GM10248 (cell line): ENCODE measurements at regions of chr19 and their contacts with region 1.

Region 1: GRCh38 chr19:810883-811489 is 10.8 kb downstream of the PLPPR3 start:
- DNase-seq: no peak
- CTCF ChIP-seq: no peak

Region 2: GRCh38 chr19:728011-728410 is 83.0 kb before region 1 on chr19:
- CTCF ChIA-PET with region 1: no interaction called
- POLR2A ChIA-PET with region 1: no interaction called
- DNase-seq: no peak
- CTCF ChIP-seq: no peak

Region 3: DNA sequence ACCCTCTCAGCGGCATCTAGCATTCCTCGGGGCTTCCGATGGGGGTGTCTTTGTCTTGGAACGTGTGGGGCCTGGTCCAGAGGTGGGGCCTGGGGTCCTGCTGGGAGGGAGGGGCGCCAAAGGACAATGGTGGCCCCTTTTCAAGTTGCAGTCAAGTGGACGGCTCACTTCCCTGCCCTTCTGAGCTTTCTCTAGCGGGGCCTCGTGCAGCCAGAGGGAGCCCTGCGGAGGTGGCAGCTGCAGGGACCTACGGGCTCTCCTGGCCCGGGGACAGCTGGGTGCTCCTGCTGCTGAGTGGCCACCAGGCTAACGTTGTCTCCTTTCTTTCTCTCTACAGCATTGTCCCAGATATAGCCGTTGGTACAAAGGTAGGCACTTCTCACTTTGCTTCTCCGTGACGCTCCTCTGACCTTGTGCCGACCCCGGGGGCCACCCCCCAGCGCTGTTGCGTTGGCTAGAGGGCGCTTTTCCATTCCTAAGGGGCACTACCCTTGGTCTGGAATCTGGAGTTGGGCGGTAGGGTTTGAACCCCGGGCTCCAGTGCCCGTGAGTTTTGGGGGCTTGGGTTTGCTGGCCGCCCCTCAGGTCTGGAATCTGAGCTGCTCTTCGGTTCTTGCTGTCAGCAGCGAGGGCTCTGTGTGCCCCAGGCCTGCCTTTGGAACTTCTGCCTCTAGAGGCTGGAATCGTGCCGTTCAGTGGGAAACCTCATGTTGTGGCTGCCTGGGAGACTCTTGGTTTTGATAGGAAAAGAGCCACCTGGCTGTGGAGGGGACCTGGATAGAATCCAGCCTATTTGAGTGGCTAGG is 11.7 kb before region 1 on chr19:
- CTCF ChIA-PET with region 1: no interaction called
- POLR2A ChIA-PET with region 1: interaction called, 14 read pairs
- DNase-seq: no peak
- CTCF ChIP-seq: no peak